ENCODE measurements at regions of chr12 and their contacts with region 1.

Region 1: DNA sequence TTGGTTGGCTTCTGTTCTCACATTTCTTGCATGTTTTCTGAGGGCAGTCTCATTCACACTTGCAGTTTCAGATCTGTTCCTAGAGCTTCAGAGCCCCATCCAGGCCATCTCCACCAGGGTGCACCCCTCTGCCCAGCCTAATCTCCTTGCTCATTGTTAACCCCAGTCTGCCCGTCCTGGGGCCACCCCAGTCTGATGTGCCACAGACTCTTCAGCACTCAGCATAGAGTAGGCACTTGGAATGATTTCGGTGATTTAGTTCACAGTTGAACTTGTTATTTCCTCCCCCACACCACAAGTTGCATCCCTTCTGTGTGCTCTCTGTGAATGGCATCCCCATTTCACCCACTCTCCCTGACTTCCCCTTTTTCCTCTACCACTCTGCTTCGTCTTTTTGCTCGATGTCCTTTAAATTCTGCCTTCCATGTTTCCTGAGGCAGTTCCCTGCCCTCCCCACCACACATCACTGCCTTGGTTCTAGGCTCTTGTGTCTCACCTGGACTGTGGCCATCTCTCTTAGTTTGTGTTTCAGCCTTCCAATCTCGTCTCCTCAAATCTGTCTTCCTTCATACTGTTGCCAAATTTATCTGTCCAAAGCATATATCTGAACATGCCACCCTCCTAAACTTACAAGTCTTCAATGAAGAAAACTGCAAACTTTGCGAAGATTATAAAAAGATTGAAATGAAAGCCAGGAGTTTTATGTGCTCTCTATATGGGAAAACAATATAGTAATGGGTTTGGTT is 41.5 kb downstream of the ANO6 start:
- DNase-seq: no peak
- H3K4me3 ChIP-seq: no peak overlapping the region
- H3K4me3 Mint-ChIP-seq: no peak overlapping the region
- H3K27ac Mint-ChIP-seq: peak overlapping the region; percentile 71
- H3K4me1 ChIP-seq: peaks cover 72% of the 10 kb centered on the region
- H3K4me1 Mint-ChIP-seq: peaks cover 53% of the 10 kb centered on the region
- H3K27me3 ChIP-seq: no peaks in the 10 kb centered on the region
- H3K27me3 Mint-ChIP-seq: no peaks in the 10 kb centered on the region
- CTCF ChIP-seq: no peak

Region 2: GRCh38 chr12:43869184-43869583 is 1388.2 kb before region 1 on chr12:
- CTCF ChIA-PET with region 1: no interaction called
- POLR2A ChIA-PET with region 1: no interaction called
- intact Hi-C with region 1: no loop called
- DNase-seq: no peak
- H3K4me3 ChIP-seq: no peak overlapping the region
- H3K4me3 Mint-ChIP-seq: no peak overlapping the region
- H3K27ac Mint-ChIP-seq: no peak overlapping the region
- H3K4me1 ChIP-seq: no peaks in the 10 kb centered on the region
- H3K4me1 Mint-ChIP-seq: peaks cover 7% of the 10 kb centered on the region
- H3K27me3 ChIP-seq: no peaks in the 10 kb centered on the region
- H3K27me3 Mint-ChIP-seq: no peaks in the 10 kb centered on the region
- CTCF ChIP-seq: no peak

Region 3: DNA sequence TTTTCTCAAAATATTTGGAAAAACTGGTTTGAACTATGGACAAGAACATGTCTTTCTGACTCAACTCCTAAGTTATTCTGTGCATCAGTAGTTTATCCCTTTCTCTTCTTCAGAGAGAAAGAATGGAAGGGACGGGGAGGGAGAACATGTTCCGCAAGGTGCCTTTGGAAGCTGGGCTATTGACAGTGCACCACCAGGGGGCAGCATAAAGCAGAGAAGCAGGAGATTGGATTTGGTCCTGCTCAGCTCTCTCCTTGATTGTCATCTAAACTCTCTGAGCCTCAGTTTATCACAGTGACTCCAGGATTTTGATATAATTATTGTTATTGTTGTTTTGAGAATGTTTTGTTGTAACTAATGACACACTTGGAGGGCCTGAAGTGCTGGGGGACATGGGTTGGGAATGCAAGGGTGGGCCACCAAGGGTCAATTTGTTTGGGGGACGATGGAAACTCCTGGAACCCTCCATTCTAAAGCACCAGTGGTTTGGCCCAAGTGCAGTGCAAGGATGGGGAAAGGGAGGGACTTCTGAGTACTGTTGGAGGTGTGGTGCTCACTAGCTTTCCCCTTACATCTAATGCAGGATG is 86.8 kb before region 1 on chr12:
- CTCF ChIA-PET with region 1: interaction called, 3 read pairs
- POLR2A ChIA-PET with region 1: no interaction called
- intact Hi-C with region 1: loop called (anchors 2 kb)
- DNase-seq: peak; percentile 84 to 90
- H3K4me3 ChIP-seq: no peak overlapping the region
- H3K4me3 Mint-ChIP-seq: no peak overlapping the region
- H3K27ac Mint-ChIP-seq: no peak overlapping the region
- H3K4me1 ChIP-seq: no peaks in the 10 kb centered on the region
- H3K4me1 Mint-ChIP-seq: peaks cover 12% of the 10 kb centered on the region
- H3K27me3 ChIP-seq: no peaks in the 10 kb centered on the region
- H3K27me3 Mint-ChIP-seq: no peaks in the 10 kb centered on the region
- CTCF ChIP-seq: peak; percentile 94 to 95

Region 4: GRCh38 chr12:45215419-45216229 is 41.7 kb before region 1 on chr12 and contains the start of gene ANO6:
- CTCF ChIA-PET with region 1: interaction called, 4 read pairs
- POLR2A ChIA-PET with region 1: interaction called, 9 read pairs
- intact Hi-C with region 1: loop called (anchors 1 kb)
- DNase-seq: peak; percentile 93 to 94
- H3K4me3 ChIP-seq: peak within 1 kb of the TSS; percentile 70
- H3K4me3 Mint-ChIP-seq: peak within 1 kb of the TSS; percentile 96
- H3K27ac Mint-ChIP-seq: peak within 1 kb of the TSS; percentile 84
- H3K4me1 ChIP-seq: peaks cover 22% of the 10 kb centered on the region
- H3K4me1 Mint-ChIP-seq: peaks cover 24% of the 10 kb centered on the region
- H3K27me3 ChIP-seq: no peaks in the 10 kb centered on the region
- H3K27me3 Mint-ChIP-seq: no peaks in the 10 kb centered on the region
- CTCF ChIP-seq: peak in 1 of 2 experiments; percentile 70
- total RNA-seq, gene ANO6: 116 and 126 TPM in 2 replicates

Region 5: DNA sequence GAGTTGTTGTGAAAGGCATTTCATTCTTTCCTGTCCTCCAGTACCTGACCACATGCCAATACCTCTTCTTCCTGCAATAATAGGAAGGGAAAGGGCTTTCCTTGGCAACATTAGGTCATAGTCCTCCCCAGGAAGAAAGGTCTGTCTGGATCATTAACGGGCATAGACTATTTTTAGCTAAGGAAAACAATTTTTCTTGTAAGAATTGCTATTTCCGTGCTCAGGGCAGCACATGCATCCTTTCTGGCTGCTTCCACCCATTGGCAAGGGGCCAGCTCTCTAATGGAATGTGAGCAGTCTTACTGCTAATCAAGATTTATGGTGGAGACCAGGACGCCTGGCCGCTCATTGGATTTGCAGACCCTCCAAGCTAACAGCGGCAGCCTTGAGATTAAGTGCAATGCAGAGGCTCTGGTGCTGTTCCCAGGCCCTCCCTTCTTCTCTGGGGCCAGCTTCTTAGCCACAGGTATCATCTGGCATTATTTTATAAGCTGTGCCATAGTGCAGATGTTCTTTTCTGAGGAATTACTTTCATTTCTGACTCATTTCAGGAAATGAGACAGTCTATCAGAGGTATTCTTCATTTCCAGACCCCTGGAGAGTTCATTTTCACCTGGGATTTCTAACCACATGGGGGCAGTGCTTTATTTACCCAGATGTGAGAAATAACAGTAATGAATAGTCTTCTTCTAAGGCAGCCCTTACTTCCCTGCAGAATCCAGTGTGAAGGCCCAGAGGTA is 11.5 kb after region 1 on chr12:
- CTCF ChIA-PET with region 1: interaction called, 8 read pairs
- POLR2A ChIA-PET with region 1: interaction called, 6 read pairs
- intact Hi-C with region 1: loop called (anchors 1 kb)
- DNase-seq: peak in 1 of 2 experiments; percentile 62
- H3K4me3 ChIP-seq: no peak overlapping the region
- H3K4me3 Mint-ChIP-seq: no peak overlapping the region
- H3K27ac Mint-ChIP-seq: peak overlapping the region; percentile 13
- H3K4me1 ChIP-seq: peaks cover 62% of the 10 kb centered on the region
- H3K4me1 Mint-ChIP-seq: peaks cover 48% of the 10 kb centered on the region
- H3K27me3 ChIP-seq: no peaks in the 10 kb centered on the region
- H3K27me3 Mint-ChIP-seq: no peaks in the 10 kb centered on the region
- CTCF ChIP-seq: peak; percentile 45 to 63

Region 6: GRCh38 chr12:45309836-45310626 is 52.7 kb after region 1 on chr12:
- CTCF ChIA-PET with region 1: no interaction called
- POLR2A ChIA-PET with region 1: no interaction called
- intact Hi-C with region 1: no loop called
- DNase-seq: no peak
- H3K4me3 ChIP-seq: no peak overlapping the region
- H3K4me3 Mint-ChIP-seq: no peak overlapping the region
- H3K27ac Mint-ChIP-seq: no peak overlapping the region
- H3K4me1 ChIP-seq: no peaks in the 10 kb centered on the region
- H3K4me1 Mint-ChIP-seq: peaks cover 7% of the 10 kb centered on the region
- H3K27me3 ChIP-seq: no peaks in the 10 kb centered on the region
- H3K27me3 Mint-ChIP-seq: no peaks in the 10 kb centered on the region
- CTCF ChIP-seq: no peak

Region 7: DNA sequence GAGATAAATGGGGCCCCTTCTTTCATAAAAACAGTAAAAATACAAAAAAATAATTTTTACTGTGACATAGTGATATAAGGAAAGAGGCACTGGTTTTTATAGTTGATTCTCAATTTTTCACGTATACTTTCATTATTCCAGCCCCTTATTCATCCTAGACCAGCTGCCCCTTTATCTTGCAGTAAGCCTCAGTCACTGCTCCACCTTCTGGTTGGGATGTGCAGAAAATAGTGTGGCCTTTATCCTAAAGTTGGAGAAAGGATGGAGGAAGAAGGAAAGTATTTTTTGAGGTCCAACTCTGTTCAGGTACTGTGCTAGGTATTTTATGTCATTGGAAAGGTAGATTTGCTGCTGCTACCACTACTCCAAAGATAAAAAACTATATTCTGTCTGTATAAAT is 131.2 kb after region 1 on chr12:
- CTCF ChIA-PET with region 1: no interaction called
- POLR2A ChIA-PET with region 1: no interaction called
- intact Hi-C with region 1: loop called (anchors 2 kb)
- DNase-seq: peak; percentile 49 to 51
- H3K4me3 ChIP-seq: no peak overlapping the region
- H3K4me3 Mint-ChIP-seq: no peak overlapping the region
- H3K27ac Mint-ChIP-seq: no peak overlapping the region
- H3K4me1 ChIP-seq: no peaks in the 10 kb centered on the region
- H3K4me1 Mint-ChIP-seq: peaks cover 5% of the 10 kb centered on the region
- H3K27me3 ChIP-seq: no peaks in the 10 kb centered on the region
- H3K27me3 Mint-ChIP-seq: no peaks in the 10 kb centered on the region
- CTCF ChIP-seq: peak; percentile 59 to 81